Cardiac septum (tissue), 1 donor: ENCODE measurements at regions of chr3 and their contacts with region 1.

Region 1: GRCh38 chr3:101779047-101779821 is at the start of gene NXPE3:
- DNase-seq: peak; percentile 98
- total RNA-seq, gene NXPE3: 26.9 TPM

Region 2: DNA sequence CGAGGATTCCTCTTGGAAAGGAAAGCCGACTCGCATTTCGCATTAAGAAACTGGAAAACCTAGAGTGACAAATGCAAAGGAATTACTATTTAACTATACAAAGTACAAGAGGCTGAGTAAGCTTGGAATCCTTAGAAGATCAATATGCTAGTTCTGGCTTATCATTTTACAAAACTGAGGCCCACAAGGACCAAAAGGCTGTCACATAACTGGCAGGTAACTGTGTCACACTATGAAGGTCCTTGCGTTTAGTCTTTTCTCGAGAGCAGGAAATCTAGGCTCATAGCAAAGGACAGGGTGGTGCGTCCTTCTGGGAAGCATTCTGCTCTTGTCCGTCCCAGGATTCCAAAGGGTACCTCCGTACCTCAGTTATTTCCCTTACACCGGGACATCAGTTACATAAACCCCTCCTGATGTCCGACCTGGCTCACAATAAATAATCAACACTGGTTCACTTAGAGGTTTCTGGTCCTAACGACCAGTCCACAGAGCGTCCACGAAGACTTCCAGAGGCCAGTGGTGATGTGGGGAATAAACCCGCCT is 93.3 kb before region 1 on chr3:
- intact Hi-C with region 1: loop called (anchors 5 kb)
- DNase-seq: no peak

Region 3: DNA sequence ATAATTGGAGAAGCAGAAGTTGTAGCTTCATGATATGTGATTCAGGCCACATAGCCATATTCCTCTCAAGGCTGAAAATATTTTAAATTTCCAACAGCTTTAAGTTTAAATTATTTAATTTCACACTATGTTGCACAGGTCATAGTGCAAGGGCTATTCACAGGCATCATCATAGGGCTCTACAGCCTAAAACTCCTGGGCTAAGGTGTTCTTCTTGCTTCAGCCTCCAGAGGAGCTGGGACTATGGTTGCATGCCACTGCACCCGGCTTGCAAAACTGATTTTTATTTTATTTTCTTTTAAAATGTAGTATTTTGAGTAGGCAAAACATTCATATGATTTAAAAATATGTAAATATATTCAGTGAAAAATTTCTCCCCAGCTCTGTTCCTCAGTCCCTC is 60.8 kb before region 1 on chr3:
- intact Hi-C with region 1: no loop called
- DNase-seq: no peak

Region 4: DNA sequence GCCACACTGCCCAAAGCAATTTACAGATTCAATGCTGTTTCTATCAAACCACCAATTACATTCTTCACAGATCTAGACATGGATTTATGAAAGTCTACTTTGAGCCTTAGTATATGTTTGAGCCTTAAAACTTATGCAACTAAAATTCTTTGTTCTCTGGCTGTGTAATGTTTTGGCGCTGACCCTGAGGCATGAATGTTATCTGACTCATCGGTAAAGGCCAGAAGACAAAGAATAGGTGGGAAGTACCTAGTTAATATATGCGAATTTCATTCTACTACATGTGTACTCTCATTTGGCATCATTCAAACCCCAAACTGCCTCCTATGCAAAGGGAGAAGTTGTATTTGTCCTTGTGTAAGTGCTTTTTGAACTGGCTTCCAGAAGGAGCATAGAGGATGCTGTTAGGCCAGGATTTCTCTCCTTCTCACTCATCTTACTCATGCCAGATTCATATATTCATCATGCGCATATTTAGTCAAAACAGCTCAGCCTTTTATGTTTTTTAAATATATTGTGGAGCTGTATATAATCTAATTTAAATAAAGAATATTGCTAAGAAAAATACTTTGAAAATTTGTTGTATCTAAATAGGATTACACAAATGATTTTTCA is 274.2 kb after region 1 on chr3:
- intact Hi-C with region 1: no loop called
- DNase-seq: no peak